GM12878 (cell line): ENCODE measurements at regions of chr2 and their contacts with region 1.

Region 1: DNA sequence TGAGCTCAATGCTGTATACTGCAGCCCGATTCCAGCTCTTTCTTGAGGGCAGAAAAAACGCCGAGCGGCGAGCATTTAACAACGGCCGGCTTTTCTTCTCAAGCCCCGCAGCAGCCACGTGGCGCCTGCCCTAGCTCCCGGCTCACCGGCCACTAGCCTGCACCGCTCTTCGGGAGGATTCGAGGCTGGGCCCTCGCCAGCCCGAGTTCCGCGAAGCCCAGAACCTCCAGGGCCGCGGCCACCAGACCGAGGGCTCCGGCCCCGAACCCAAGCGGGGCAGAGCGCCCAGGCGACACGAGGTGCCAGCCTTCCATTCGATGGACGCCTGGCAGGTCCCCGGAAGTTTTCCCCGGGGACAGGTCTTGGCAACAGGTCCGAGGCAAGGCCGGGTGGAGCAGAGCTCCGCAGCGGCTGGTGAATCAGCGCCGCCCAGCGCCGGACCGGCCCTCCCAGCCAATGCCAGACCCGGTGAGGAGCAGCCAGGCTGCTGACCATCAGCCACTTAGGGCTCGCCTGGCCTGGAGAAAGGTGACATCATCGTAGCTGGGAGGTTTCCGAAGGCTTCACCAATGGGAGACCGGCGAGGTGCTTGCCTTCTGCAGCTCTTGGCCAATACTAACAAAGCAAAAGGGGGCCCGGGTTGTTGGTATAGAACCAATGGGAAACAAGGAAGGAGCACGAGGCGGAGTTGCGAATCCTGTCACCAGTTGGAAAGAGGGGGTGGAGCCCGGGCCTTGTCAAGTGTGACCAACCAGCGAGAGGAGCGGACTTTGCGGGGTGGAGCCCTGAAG is 544 bp upstream of the MXD1 start:
- DNase-seq: peak; percentile 100
- ATAC-seq: peak; percentile 93
- H3K4me3 ChIP-seq: peak overlapping the region; percentile 68
- H3K27ac ChIP-seq: peak overlapping the region; percentile 86
- H3K4me1 ChIP-seq: peaks cover 8% of the 10 kb centered on the region; the same call in 1 of the 2 replicates
- H3K27me3 ChIP-seq: no peaks in the 10 kb centered on the region
- CTCF ChIP-seq: peak in 1 of 3 experiments; percentile 48; a peak in 2 of 6 replicates
- EP300 ChIP-seq: no peak
- POLR2A ChIP-seq: peak; percentile 85
- RAD21 ChIP-seq: 0 out of 2 replicates have a peak, but pooled peaks have one; percentile 1

Region 2: DNA sequence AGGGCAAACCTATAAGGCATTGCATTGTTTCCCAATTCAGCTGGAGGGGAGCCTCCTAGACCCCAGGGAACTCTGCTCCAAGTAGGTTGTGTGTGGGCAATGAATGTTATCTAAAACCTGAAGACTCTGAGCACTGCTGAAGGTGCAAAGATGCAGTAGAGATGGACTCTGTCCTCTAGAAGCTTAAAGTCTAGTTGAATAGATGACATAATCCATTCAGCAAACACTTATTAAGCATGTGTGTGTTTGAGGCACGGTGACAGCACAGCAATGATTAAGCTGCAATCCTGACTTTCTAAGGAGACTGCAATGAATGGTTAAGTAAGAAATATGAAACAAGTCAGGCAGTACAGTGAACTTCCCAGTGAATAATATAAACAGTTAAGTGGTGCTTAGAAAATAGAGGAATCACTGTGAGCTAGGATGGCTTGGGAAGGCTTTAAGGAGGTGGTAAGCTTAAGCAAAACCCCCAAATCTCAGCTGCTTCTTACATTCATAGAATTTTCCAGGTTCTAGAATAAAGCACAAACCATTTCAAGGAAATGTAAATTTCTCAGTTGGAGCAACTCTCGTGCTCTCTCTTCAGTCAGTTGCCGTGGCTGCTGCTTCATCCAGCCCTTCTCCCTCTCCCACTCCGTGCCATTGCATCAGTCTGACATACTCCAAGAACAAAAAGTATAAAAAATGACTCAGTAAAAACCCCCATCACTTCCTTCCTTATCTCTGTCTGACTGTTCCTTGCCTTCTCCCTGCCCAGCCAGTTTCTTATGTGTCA is 19.7 kb after region 1 on chr2:
- CTCF ChIA-PET with region 1: interaction called, 7 read pairs
- POLR2A ChIA-PET with region 1: interaction called, 4 read pairs
- RAD21 ChIA-PET with region 1: interaction called, 6 read pairs
- SMC1A ChIA-PET with region 1: interaction called, 14 read pairs
- in situ Hi-C with region 1: no loop called
- intact Hi-C with region 1: no loop called
- DNase-seq: no peak
- ATAC-seq: peak; percentile 52
- H3K4me3 ChIP-seq: no peak overlapping the region
- H3K27ac ChIP-seq: no peak overlapping the region
- H3K4me1 ChIP-seq: peaks cover 17% of the 10 kb centered on the region
- H3K27me3 ChIP-seq: no peaks in the 10 kb centered on the region
- CTCF ChIP-seq: no peak
- EP300 ChIP-seq: no peak
- POLR2A ChIP-seq: no peak
- RAD21 ChIP-seq: no peak

Region 3: GRCh38 chr2:70086838-70087701 is 172.7 kb after region 1 on chr2 and contains the start of gene PCBP1:
- CTCF ChIA-PET with region 1: interaction called, 42 read pairs
- POLR2A ChIA-PET with region 1: interaction called, 38 read pairs
- RAD21 ChIA-PET with region 1: interaction called, 86 read pairs
- SMC1A ChIA-PET with region 1: interaction called, 82 read pairs
- in situ Hi-C with region 1: no loop called
- intact Hi-C with region 1: loop called (anchors 2 kb)
- DNase-seq: peak; percentile 84
- ATAC-seq: peak; percentile 25
- H3K4me3 ChIP-seq: peak within 1 kb of the TSS; percentile 92
- H3K27ac ChIP-seq: peak within 1 kb of the TSS; percentile 100
- H3K4me1 ChIP-seq: peaks cover 35% of the 10 kb centered on the region
- H3K27me3 ChIP-seq: no peaks in the 10 kb centered on the region
- CTCF ChIP-seq: no peak
- EP300 ChIP-seq: peak in 1 of 2 experiments; percentile 10; a peak in 1 of 4 replicates
- POLR2A ChIP-seq: no peak
- RAD21 ChIP-seq: 0 out of 2 replicates have a peak, but pooled peaks have one; percentile 0
- polyA plus RNA-seq, gene PCBP1: 24.4 to 28.9 TPM

Region 4: DNA sequence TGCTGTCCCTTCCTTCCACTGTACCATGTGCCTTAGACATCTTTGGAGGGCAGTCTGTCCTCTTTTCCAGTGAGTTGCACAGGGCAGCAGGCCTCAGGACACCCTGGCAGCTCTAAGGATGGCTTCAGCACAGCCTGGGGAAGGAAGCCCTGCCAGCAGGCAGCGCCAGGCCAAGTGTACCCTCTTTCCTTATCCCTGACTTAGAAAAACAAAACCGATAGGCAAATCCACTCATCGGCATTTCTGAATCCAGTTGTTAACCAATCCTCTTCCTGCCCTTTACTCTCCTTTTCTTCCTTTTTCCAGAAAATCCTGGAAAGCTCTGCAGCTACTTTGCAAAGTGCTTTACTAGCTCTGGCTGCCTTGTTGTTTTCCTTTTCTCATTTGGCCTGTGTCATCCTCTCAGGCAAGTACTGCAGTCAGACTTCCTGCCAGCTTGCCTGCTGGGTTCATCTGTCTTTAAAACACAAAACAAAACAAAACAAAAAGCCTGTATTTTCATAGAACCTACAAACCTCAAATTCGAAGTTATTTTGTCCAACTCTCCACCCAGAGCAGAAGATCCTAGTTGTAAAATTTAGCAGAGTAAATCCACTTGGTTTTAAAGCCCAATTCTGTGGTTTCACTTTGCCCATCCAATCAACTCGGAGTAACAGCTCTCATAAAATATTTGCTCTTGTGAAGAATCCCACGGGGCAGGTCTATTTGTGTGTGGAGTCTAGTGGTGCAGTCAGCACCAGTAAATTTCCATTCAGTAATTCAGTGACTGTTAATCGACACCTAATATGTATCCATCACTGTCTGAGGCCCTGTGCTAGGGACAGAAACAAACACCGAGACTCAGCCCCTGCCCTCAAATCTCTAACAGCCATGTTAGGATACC is 218.1 kb after region 1 on chr2:
- CTCF ChIA-PET with region 1: interaction called, 22 read pairs
- POLR2A ChIA-PET with region 1: interaction called, 18 read pairs
- RAD21 ChIA-PET with region 1: interaction called, 79 read pairs
- SMC1A ChIA-PET with region 1: interaction called, 29 read pairs
- in situ Hi-C with region 1: no loop called
- intact Hi-C with region 1: no loop called
- DNase-seq: no peak
- ATAC-seq: peak; percentile 63
- H3K4me3 ChIP-seq: peak overlapping the region; percentile 67
- H3K27ac ChIP-seq: peak overlapping the region; percentile 99
- H3K4me1 ChIP-seq: peaks cover 49% of the 10 kb centered on the region
- H3K27me3 ChIP-seq: no peaks in the 10 kb centered on the region
- CTCF ChIP-seq: no peak
- EP300 ChIP-seq: no peak
- POLR2A ChIP-seq: peak; percentile 73
- RAD21 ChIP-seq: no peak

Region 5: DNA sequence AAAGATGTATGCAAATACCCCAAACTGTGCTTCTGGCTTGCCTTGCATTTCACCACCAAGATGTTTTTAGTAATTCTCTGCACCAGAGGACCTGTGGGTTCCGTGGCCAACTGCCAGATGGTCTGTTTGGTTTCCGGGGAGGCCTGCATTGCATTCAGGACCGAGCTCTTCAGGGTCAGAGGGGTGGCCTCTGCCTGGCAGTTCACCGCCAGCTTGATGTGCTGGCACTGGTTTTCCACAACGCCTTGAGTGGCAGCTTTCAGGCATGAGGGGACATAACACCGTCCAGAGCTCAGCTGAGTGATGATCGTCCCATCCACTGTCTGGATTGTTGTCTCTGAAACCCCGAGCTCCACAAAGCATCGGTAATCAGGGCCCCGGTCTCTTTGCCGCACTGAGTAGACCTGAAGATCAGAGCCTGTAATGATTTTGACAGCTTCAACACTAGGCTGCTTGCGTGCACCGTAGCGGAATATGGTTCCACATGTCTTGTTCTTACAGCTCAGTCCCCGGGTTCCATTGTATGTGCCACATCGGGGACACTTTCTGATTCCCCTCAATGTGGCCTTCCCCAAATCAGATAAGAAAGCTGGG is 267.1 kb after region 1 on chr2:
- CTCF ChIA-PET with region 1: interaction called, 12 read pairs
- POLR2A ChIA-PET with region 1: interaction called, 5 read pairs
- RAD21 ChIA-PET with region 1: interaction called, 12 read pairs
- SMC1A ChIA-PET with region 1: interaction called, 3 read pairs
- in situ Hi-C with region 1: no loop called
- intact Hi-C with region 1: no loop called
- DNase-seq: peak; percentile 88
- ATAC-seq: peak; percentile 94
- H3K4me3 ChIP-seq: peak overlapping the region; percentile 18; the same call in 1 of the 2 replicates
- H3K27ac ChIP-seq: peak overlapping the region; percentile 90
- H3K4me1 ChIP-seq: peaks cover 21% of the 10 kb centered on the region
- H3K27me3 ChIP-seq: no peaks in the 10 kb centered on the region
- CTCF ChIP-seq: no peak
- EP300 ChIP-seq: 0 out of 4 replicates have a peak, but pooled peaks of 1 of the 2 experiments have one; percentile 26
- POLR2A ChIP-seq: peak; percentile 90
- RAD21 ChIP-seq: no peak

Region 6: GRCh38 chr2:70616168-70616694 is 701.9 kb after region 1 on chr2:
- CTCF ChIA-PET with region 1: interaction called, 7 read pairs
- POLR2A ChIA-PET with region 1: no interaction called
- RAD21 ChIA-PET with region 1: no interaction called
- SMC1A ChIA-PET with region 1: interaction called, 3 read pairs
- in situ Hi-C with region 1: no loop called
- intact Hi-C with region 1: loop called (anchors 10 kb)
- DNase-seq: no peak
- ATAC-seq: no peak
- H3K4me3 ChIP-seq: no peak overlapping the region
- H3K27ac ChIP-seq: no peak overlapping the region
- H3K4me1 ChIP-seq: no peaks in the 10 kb centered on the region
- H3K27me3 ChIP-seq: no peaks in the 10 kb centered on the region; a peak in 1 of 4 replicates
- CTCF ChIP-seq: no peak
- EP300 ChIP-seq: no peak
- POLR2A ChIP-seq: no peak
- RAD21 ChIP-seq: no peak